Heart left ventricle (tissue), 16 donors: ENCODE measurements at regions of chr1 and their contacts with region 1.

Region 1: GRCh38 chr1:216750012-216750627 is 26.9 kb upstream of the ESRRG start:
- DNase-seq: peak in 3 of 5 donors; percentile 15 to 30 (median 19)
- ATAC-seq: peak; percentile 71 to 86 (median 81)
- H3K4me3 ChIP-seq: no peak overlapping the region
- H3K27ac ChIP-seq: peak overlapping the region in 7 of 12 donors; percentile 23 to 81 (median 33)
- H3K4me1 ChIP-seq: peaks cover 0 to 29% (median 1%) of the 10 kb centered on the region in 12 donors
- H3K27me3 ChIP-seq: no peaks in the 10 kb centered on the region
- CTCF ChIP-seq: peak in 11 of 12 donors; percentile 3 to 66 (median 54)
- POLR2A ChIP-seq: no peak

Region 2: DNA sequence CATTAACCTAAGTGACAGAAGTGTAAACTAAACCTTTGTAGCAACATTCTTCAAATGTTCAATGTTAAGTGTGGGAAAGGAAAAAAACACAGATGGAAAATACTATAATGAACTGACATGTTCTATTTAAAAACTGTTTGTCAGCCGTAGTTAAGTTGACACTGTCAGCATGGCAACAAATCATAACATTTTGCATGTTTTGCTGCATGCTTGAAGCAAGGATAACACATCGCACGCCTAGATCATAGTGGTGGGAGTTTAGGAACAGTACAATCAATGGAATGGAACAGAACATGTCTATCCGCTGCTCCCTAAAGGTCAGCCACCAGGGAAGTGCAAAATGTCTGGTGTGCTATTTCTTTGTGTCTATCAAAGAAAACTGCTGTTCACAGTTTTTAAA is 35.6 kb after region 1 on chr1:
- intact Hi-C with region 1: loop called in 1 of 10 experiments (anchors 2 kb)
- DNase-seq: peak in 2 of 5 donors; percentile 13 to 33
- ATAC-seq: peak; percentile 91 to 97 (median 92)
- H3K4me3 ChIP-seq: peak overlapping the region in 1 of 12 donors; percentile 22
- H3K27ac ChIP-seq: peak overlapping the region in 10 of 12 donors; percentile 36 to 85 (median 62)
- H3K4me1 ChIP-seq: peaks cover 0 to 20% (median 4%) of the 10 kb centered on the region in 12 donors
- H3K27me3 ChIP-seq: no peaks in the 10 kb centered on the region
- CTCF ChIP-seq: no peak
- POLR2A ChIP-seq: no peak

Region 3: GRCh38 chr1:217078078-217078690 is 328.1 kb after region 1 on chr1:
- intact Hi-C with region 1: loop called in 4 of 10 experiments (anchors 5 to 10 kb)
- DNase-seq: peak in 1 of 5 donors; percentile 30
- ATAC-seq: peak; percentile 69 to 74 (median 73)
- H3K4me3 ChIP-seq: peak overlapping the region in 11 of 12 donors; percentile 1 to 54 (median 38)
- H3K27ac ChIP-seq: peak overlapping the region; percentile 9 to 80 (median 64)
- H3K4me1 ChIP-seq: peaks cover 0 to 10% (median 0%) of the 10 kb centered on the region in 12 donors
- H3K27me3 ChIP-seq: no peaks in the 10 kb centered on the region
- CTCF ChIP-seq: no peak
- POLR2A ChIP-seq: no peak

Region 4: DNA sequence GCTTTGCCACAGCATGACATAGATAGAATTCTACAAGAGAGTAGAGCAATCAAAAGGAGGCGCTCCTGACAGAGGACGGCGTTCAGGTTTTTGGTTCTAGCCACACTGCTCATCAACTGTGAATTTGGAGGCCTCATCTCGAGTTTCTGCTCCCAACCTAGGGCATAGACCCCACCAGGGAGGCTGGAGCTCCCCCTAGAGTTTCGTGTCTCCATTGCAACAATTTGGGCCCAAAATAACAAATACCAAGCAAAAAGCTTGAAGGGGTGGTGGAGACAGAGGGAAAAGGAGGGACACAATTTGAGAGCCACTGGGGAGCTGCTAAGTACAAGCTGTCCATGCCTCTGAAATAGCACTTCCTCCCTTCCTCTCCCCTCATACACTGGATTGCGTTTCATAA is 583.8 kb after region 1 on chr1:
- intact Hi-C with region 1: loop called in 3 of 10 experiments (anchors 5 to 10 kb)
- DNase-seq: no peak
- ATAC-seq: peak in 1 of 4 donors; percentile 31
- H3K4me3 ChIP-seq: no peak overlapping the region
- H3K27ac ChIP-seq: no peak overlapping the region
- H3K4me1 ChIP-seq: peaks cover 0 to 9% (median 2%) of the 10 kb centered on the region in 12 donors
- H3K27me3 ChIP-seq: no peaks in the 10 kb centered on the region
- CTCF ChIP-seq: peak in 11 of 12 donors; percentile 12 to 51 (median 40)
- POLR2A ChIP-seq: no peak

Region 5: DNA sequence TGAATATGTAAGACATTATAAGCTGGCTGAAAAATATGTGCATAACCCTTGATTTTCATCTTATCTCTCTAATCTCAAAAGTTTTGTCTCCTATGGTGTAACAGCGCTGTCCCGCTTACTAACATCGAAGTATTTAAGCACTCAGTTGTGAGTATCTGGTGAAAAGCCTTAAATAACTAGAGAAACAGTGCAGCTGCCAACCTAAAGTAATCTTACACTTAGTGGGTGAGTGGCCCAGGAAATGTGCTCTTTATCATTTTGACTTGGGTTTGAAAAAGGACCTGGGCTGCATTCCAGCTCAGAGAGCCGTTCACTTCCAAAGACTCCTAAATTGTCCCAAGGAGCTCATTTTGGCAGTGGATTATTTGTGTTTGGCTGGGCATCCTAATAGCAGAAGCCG is 1106.9 kb after region 1 on chr1:
- intact Hi-C with region 1: loop called in 1 of 10 experiments (anchors 10 kb)
- DNase-seq: no peak
- ATAC-seq: no peak
- H3K4me3 ChIP-seq: no peak overlapping the region
- H3K27ac ChIP-seq: no peak overlapping the region
- H3K4me1 ChIP-seq: peaks cover 0 to 9% (median 0%) of the 10 kb centered on the region in 12 donors
- H3K27me3 ChIP-seq: no peaks in the 10 kb centered on the region
- CTCF ChIP-seq: no peak
- POLR2A ChIP-seq: no peak